ENCODE measurements at regions of chr22 and their contacts with region 1.

Region 1: DNA sequence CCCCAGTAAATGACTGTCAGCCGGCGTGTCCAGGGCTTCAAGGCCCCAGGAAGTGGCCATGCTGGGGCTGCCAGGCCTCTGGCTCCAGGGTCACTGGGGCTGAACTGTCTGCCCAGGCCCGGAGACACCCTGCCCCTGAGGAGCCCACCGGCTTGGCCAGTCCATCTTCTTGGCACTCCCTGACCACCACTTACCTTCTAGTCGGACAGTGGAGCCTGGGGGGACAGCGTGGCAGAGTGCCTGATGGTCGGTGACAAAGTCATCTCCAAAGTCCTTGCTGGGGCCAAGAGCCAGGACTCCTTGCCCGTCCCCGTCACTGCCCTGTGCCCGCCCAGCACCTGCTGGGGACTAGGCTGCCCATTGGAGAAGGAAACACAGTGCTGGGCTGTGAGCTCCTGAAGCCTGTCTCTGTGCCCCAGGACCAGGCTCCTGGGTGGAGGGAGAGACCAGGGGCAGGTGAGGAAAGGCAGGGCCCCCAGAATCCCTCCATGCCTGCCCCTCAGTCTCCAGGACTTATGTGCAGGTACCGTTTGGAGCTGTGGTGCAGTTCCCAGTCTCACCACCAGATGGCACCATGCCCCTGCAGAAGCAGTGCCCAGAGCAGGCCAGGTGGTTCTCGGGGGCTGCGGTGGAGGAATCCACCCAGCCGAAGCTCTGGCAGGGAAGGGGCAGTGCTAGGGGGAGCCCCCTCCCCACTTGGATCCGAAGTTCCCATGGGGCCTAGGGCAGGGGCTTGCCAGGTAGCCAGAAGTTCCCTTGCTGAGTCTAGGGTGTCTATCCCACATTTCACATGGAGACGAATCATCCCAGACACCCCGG is 6.0 kb upstream of the CCDC188 start:
- DNase-seq: peak; percentile 79 to 96 (median 91)
- ATAC-seq: peak; percentile 76
- H3K4me3 ChIP-seq: no peak overlapping the region
- H3K4me1 ChIP-seq: peaks cover 3% of the 10 kb centered on the region
- CTCF ChIP-seq: peak; percentile 99

Region 2: GRCh38 chr22:20279662-20280134 is 122.9 kb after region 1 on chr22:
- intact Hi-C with region 1: loop called in 1 of 2 experiments (anchors 10 kb)
- DNase-seq: no peak
- ATAC-seq: no peak
- H3K4me3 ChIP-seq: no peak overlapping the region
- H3K4me1 ChIP-seq: no peaks in the 10 kb centered on the region
- CTCF ChIP-seq: no peak

Region 3: GRCh38 chr22:20312396-20313191 is 155.8 kb after region 1 on chr22:
- intact Hi-C with region 1: no loop called
- DNase-seq: peak in 1 of 3 donors; percentile 27
- ATAC-seq: peak; percentile 4
- H3K4me3 ChIP-seq: no peak overlapping the region
- H3K4me1 ChIP-seq: no peaks in the 10 kb centered on the region
- CTCF ChIP-seq: no peak